ENCODE measurements at regions of chr16 and their contacts with region 1.

Region 1: DNA sequence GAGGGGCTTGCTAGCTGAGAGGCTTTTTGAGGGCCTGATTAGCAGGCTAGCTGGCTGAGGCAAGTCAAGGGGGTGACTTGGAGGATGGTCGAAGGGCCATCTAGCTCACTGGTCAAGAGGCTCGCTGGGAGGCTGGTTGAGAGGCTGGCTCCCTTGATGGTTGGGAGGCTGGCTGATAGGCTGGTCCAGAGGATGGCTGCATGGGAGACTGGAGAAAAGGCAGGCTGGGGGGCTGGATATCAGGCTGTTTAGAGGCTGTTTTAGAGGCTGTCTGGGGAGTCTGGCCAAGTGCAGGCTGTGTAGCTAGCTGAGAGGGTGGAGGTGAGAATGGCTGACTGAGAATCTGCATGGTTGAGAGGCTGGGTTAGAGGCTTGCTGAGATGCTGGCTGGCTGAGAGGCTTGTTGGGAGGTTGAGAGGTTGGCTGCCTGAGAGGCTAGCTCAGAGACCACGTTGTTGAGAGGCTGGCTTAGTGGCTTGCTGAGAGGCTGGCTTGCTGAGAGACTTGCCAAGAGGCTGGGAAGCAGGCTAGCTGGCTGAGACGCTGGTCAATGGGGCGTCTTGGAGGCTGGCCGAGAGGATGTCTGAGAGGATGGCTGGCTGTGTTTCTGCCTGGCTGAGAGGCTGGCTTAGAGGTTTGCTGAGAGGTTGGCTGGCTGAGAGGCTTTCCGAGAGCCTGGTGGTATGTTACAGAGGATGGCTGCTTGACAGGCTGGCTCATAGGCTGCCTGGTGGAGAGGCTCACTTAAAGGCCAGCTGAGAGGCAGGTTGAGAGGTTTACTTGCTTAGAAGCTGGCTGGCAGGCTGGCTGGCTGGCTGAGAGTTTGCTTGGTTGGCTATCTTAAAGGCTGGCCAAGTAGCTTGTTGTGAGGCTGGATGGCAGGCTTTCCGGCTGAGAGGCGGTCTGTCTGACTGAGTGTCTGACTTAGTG is 36.6 kb upstream of the ACSM2B start:
- DNase-seq: peak; percentile 90

Region 2: DNA sequence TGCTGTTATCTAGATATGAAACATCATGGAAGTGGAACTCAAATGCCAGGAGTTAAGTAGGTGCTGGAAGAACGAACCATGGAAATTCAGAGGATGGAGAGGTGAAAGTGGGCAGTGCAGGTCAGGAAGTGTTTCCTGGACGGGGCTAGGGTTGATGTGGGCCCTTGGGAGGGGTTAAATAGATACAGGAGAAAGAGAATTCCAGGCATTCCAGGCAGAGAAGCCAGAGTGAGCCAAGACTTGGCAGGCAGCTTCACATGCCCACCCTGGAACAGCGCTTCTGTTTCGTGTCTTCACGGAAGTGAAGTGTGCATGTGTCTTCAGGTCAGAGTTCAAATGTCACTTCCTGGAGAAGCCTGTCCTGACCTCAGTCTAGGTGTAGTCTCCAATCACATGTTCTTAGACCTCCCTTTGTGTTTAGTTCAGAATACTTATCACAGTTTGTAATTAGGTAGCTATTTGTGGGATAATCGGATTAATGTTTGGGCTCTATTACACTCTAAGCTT is 326.8 kb before region 1 on chr16:
- intact Hi-C with region 1: no loop called
- DNase-seq: no peak

Region 3: GRCh38 chr16:20538181-20538580 is 74.6 kb before region 1 on chr16:
- intact Hi-C with region 1: no loop called
- DNase-seq: no peak

Region 4: GRCh38 chr16:20683812-20684211 is 71.0 kb after region 1 on chr16:
- intact Hi-C with region 1: loop called in 1 of 2 experiments (anchors 2 kb)
- DNase-seq: no peak

Measured in posterior vena cava (tissue), 2 donors.